HCT116 (cell line): ENCODE measurements at regions of chr10 and their contacts with region 1.

Region 1: DNA sequence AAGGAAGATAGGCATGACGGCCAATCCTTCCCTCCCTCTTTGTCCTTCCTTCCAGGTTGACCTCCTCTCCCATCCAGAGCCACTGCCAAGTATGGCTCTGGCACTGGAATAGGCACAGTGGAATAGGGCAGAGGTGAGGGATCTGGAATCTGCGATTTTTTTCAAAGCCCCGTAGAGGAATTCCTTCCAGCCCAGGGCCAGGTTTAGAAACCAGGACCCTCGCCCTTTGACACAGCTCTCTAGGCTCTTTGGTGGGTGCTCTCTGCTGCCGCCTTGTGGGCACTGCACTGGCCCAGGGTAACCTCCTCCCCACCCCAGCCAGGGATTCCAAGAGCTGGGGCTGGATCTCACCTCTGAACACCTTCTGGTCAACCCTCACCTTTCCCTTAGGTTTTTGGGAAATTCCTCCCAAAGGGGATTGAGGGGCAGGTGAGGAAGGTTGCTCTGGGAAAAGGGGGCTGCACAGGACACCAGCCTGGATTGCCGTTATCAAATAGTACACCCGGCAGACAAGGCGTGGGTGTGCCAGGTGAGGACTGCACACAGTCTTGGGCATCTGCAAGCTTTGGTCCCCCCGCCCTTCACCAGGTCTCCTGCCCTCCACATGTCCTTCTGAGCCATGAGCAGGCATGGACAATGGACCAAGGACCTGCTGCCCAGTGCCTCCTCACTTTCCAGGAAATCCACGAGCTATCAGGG is 22.8 kb downstream of the C10orf105 start:
- DNase-seq: no peak
- ATAC-seq: peak; percentile 96
- H3K4me3 ChIP-seq: no peak overlapping the region
- H3K27ac ChIP-seq: no peak overlapping the region
- H3K4me1 ChIP-seq: peaks cover 0 to 8% of the 10 kb centered on the region in 2 experiments; a peak in 1 of 4 replicates
- H3K27me3 ChIP-seq: no peaks in the 10 kb centered on the region
- CTCF ChIP-seq: peak; percentile 81 to 99 (median 97)
- POLR2A ChIP-seq: no peak
- RAD21 ChIP-seq: peak; percentile 71

Region 2: DNA sequence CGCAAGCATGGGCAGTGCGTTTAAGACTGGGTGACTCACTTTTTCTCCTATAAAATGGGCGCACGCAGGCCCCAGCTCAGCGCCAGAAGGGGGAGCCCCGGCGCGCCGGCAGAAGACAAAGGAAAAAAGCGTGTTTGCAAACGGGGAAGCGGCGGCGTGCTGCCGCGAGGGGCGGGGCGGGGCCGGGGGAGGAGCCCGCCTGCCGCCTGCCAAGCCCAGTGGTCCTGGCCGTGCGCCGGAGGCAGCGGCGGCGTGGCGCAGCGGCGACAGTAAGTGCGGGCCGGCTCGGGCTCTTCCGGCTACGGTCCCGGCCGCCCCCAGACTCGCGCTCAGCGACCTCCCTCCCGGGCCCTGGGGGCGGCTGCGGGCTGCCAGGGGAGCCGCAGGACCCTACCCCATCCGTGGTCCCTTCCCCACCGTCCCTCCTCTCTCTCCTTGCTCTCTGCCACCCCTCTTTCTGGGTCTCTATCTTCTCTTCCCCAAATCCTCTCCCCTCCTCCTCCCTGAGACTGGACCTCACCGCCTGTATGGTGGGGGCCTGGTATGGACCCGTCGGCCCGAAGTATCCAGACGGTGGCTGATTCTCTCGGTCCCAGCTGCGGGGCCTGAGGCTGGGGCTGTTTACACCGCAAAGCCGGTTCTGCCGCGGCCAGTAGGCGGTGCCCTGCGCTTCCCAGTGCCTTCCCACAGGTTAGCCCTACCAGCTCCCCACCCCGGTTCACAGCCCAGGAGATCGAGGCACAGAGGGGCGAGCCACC is 377.6 kb before region 1 on chr10 and contains the start of gene SLC29A3:
- CTCF ChIA-PET with region 1: interaction called, 38 read pairs
- POLR2A ChIA-PET with region 1: interaction called, 6 read pairs
- RAD21 ChIA-PET with region 1: interaction called in 1 of 2 experiments, 3 read pairs
- intact Hi-C with region 1: loop called (anchors 1 kb)
- DNase-seq: peak; percentile 59
- ATAC-seq: peak; percentile 91
- H3K4me3 ChIP-seq: peak within 1 kb of the TSS; percentile 73 to 86
- H3K27ac ChIP-seq: peak within 1 kb of the TSS; percentile 57; the same call in 1 of the 2 replicates
- H3K4me1 ChIP-seq: peaks cover 7 to 17% of the 10 kb centered on the region in 2 experiments; a peak in 3 of 4 replicates
- H3K27me3 ChIP-seq: no peaks in the 10 kb centered on the region
- CTCF ChIP-seq: peak; percentile 69 to 77 (median 73)
- POLR2A ChIP-seq: peak; percentile 61
- RAD21 ChIP-seq: peak; percentile 90
- total RNA-seq, gene SLC29A3: 5.9 TPM

Region 3: GRCh38 chr10:71486484-71487114 is 210.2 kb before region 1 on chr10:
- CTCF ChIA-PET with region 1: interaction called, 6 read pairs
- POLR2A ChIA-PET with region 1: no interaction called
- RAD21 ChIA-PET with region 1: no interaction called
- intact Hi-C with region 1: loop called (anchors 1 kb)
- DNase-seq: peak; percentile 36
- ATAC-seq: peak; percentile 99
- H3K4me3 ChIP-seq: no peak overlapping the region
- H3K27ac ChIP-seq: no peak overlapping the region
- H3K4me1 ChIP-seq: no peaks in the 10 kb centered on the region
- H3K27me3 ChIP-seq: 0 out of 2 replicates have a peak, but pooled peaks cover 4% of the 10 kb centered on the region
- CTCF ChIP-seq: peak; percentile 76 to 96 (median 91)
- POLR2A ChIP-seq: no peak
- RAD21 ChIP-seq: peak; percentile 86

Region 4: DNA sequence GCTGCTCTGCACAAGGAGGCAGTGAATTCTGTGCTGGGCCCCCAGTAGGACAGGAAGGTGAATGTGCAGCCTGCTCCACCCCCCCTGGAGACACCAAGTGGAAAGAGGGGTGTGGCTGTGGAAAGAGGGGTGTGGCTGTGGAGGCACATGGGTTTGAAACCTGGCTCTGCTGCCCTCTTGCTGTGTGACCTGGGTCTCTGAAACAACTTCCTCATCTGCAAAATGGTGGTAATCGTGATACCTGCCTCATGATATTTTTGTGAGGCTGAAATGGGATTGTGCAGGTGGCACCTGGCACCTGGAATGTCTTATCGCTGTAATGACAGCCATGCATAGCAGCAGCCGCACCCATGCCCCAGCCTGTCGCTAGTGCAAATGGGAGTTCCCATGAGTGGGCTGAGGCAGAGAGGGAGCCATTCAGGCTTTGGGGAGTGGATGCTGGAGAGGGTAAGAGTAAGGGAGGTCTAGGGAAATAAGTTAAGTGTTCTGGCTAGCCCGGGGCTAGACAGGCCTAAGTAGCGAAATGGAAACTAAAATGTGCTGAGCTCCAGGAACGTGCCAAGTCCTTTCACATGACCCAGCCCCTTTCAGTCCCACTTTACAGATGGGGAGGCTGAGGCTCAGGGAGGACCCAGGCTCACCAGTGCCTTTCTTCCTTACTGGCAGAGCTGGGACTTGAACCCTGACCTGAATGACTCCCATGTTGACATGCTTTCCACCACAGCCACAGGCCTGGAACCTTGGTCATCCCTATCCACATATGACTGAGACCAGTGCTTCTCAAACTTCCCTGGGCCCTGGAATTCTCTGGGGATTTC is 12.2 kb before region 1 on chr10:
- CTCF ChIA-PET with region 1: interaction called, 14 read pairs
- POLR2A ChIA-PET with region 1: no interaction called
- RAD21 ChIA-PET with region 1: no interaction called
- intact Hi-C with region 1: no loop called
- DNase-seq: peak; percentile 26
- ATAC-seq: peak; percentile 94
- H3K4me3 ChIP-seq: no peak overlapping the region
- H3K27ac ChIP-seq: no peak overlapping the region
- H3K4me1 ChIP-seq: peaks cover 4 to 10% of the 10 kb centered on the region in 2 experiments; a peak in 3 of 4 replicates
- H3K27me3 ChIP-seq: no peaks in the 10 kb centered on the region
- CTCF ChIP-seq: peak; percentile 7 to 37 (median 28); a peak in 3 of 6 replicates
- POLR2A ChIP-seq: no peak
- RAD21 ChIP-seq: peak; percentile 27; the same call in 1 of the 2 replicates

Region 5: GRCh38 chr10:71771821-71772617 is 75.2 kb after region 1 on chr10:
- CTCF ChIA-PET with region 1: interaction called, 14 read pairs
- POLR2A ChIA-PET with region 1: no interaction called
- RAD21 ChIA-PET with region 1: interaction called, 3 to 6 read pairs
- intact Hi-C with region 1: loop called (anchors 5 kb)
- DNase-seq: peak; percentile 79
- ATAC-seq: peak; percentile 58
- H3K4me3 ChIP-seq: peak overlapping the region; percentile 61 to 79
- H3K27ac ChIP-seq: peak overlapping the region; percentile 63
- H3K4me1 ChIP-seq: peaks cover 58 to 83% of the 10 kb centered on the region in 2 experiments
- H3K27me3 ChIP-seq: no peaks in the 10 kb centered on the region
- CTCF ChIP-seq: no peak
- POLR2A ChIP-seq: no peak
- RAD21 ChIP-seq: no peak